Activated CD4-positive, alpha-beta T cell treated with anti-CD3 and anti-CD28 coated beads for 36 hours (primary cell): ENCODE measurements at regions of chr5 and their contacts with region 1.

Region 1: DNA sequence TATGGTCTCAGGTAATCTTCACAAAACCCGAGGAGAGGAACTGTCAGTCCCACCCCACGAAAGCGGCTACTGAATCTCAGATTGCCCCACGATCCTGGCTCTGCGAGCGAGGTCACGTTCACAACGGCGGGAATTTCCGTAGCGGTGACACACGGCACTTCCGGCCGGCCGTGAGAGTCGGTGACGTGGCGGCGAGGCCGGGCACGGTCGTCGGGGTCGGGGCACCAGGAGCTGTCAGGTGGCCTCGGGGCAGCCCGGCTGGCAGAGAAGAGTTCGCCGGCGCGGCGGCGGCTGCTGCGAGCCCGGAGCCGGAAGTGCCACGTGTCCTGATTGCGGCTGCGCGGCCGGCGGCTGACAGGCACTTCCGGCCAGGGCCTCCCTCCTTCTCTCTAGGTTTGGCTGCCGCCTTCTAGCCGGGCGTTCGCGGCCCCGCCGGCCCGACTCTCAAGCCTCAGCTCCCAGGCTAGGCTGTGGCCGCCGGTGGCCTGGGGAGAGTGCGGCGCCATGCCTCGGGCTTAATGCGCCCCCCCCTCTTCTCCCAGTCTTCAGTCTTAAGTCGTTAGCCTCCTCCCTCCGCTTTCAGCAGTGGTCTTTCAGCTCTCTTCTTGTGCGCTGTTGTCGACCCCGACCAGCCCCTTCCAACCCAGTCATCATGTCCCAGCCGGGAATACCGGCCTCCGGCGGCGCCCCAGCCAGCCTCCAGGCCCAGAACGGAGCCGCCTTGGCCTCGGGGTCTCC is at the start of gene SEC24A:
- DNase-seq: peak; percentile 96
- ATAC-seq: peak; percentile 88
- H3K4me3 Mint-ChIP-seq: peak within 1 kb of the TSS; percentile 87
- H3K27ac Mint-ChIP-seq: peak within 1 kb of the TSS; percentile 99
- H3K4me1 Mint-ChIP-seq: peaks cover 30% of the 10 kb centered on the region
- H3K27me3 Mint-ChIP-seq: no peaks in the 10 kb centered on the region
- total RNA-seq, gene SEC24A: 32.2 to 41.3 TPM

Region 2: DNA sequence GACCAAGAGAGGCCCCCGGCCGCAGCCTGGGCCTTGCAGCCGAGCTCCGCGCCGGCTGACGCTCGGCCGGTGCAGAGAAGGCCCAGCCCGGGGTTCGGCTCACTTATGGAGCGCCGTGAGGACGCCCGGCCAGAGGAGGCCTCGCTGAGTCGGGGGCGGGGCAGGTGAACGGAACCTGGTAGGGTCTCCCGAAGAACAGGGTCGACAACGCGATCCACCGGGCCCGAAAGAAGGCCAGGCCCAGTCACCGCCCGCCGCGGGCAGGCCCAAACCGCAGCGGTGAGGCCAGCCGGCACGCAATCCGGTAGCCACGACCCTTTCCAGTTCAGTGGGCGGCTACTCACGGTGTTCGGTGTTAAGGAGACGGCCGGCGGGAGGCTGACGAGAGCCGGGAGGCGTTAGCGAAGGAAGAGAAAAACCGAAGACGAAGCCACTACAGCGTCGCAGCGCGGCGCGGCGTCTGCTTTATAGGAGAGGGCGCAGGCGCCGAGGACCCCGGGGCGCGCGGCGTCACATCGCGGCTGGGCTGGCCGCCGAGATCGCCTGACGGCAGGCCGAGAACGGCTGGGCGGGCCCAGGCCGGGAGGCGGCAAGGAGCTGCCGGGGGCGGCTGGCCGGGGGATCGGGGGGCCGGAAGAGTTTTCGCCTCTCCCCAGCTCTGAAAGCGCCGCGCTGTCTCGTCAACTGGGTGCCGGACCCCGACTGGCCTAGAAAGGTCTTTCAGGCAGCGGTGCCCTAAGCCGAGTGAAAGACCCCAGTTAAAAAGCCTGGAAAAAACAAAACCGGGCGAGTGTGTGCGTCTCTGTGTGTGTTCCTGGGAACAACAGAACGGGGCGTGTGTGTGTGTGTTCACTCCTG is 471.9 kb before region 1 on chr5 and contains the start of gene SKP1:
- CTCF ChIA-PET with region 1: no interaction called
- POLR2A ChIA-PET with region 1: no interaction called
- intact Hi-C with region 1: loop called in 1 of 2 experiments (anchors 1 kb)
- DNase-seq: peak; percentile 91
- ATAC-seq: peak; percentile 85
- H3K4me3 Mint-ChIP-seq: peak within 1 kb of the TSS; percentile 98
- H3K27ac Mint-ChIP-seq: peak within 1 kb of the TSS; percentile 95
- H3K4me1 Mint-ChIP-seq: peaks cover 32% of the 10 kb centered on the region
- H3K27me3 Mint-ChIP-seq: no peaks in the 10 kb centered on the region
- total RNA-seq, gene SKP1: 218 to 265 TPM

Region 3: GRCh38 chr5:134603059-134603458 is 45.5 kb before region 1 on chr5:
- CTCF ChIA-PET with region 1: interaction called, 4 read pairs
- POLR2A ChIA-PET with region 1: interaction called, 4 read pairs
- intact Hi-C with region 1: loop called (anchors 1 kb)
- DNase-seq: no peak
- ATAC-seq: peak; percentile 91
- H3K4me3 Mint-ChIP-seq: peak overlapping the region; percentile 10
- H3K27ac Mint-ChIP-seq: peak overlapping the region; percentile 25
- H3K4me1 Mint-ChIP-seq: peaks cover 54% of the 10 kb centered on the region
- H3K27me3 Mint-ChIP-seq: no peaks in the 10 kb centered on the region

Region 4: DNA sequence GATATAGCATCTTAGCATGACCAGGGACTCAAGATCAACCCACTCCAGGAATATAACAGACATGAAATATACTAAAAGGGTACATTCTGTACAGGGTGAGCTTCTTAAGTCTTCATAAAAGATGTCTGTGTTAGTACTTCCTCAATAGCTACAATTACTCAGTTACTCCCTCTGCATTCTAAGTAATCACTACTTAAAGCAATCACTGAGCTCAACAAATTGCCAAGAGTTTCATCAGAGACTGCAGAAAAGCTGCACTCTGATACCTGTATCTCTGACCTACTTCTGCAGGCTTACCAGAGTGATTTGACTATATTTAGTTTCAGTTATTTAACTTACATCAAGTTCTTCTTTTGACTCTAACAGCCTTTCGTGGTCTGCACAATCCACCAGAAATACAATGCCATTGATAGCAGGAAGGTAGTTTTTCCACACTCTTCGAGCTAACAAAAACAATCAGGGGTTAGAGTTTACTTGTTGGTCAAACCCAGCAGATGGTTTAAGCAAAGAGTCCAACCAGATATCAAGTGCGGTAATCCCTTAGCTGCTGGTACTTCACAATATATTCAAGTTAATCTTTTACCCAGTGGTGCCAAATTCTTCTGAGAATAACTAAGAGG is 39.3 kb before region 1 on chr5:
- CTCF ChIA-PET with region 1: interaction called, 5 read pairs
- POLR2A ChIA-PET with region 1: interaction called, 4 read pairs
- intact Hi-C with region 1: loop called (anchors 1 kb)
- DNase-seq: peak; percentile 29
- ATAC-seq: peak; percentile 75
- H3K4me3 Mint-ChIP-seq: peak overlapping the region; percentile 13
- H3K27ac Mint-ChIP-seq: peak overlapping the region; percentile 94
- H3K4me1 Mint-ChIP-seq: peaks cover 42% of the 10 kb centered on the region
- H3K27me3 Mint-ChIP-seq: no peaks in the 10 kb centered on the region

Region 5: GRCh38 chr5:134637161-134637582 is 11.4 kb before region 1 on chr5:
- CTCF ChIA-PET with region 1: interaction called, 11 read pairs
- POLR2A ChIA-PET with region 1: interaction called, 4 read pairs
- intact Hi-C with region 1: loop called (anchors 1 kb)
- DNase-seq: no peak
- ATAC-seq: no peak
- H3K4me3 Mint-ChIP-seq: no peak overlapping the region
- H3K27ac Mint-ChIP-seq: no peak overlapping the region
- H3K4me1 Mint-ChIP-seq: peaks cover 6% of the 10 kb centered on the region
- H3K27me3 Mint-ChIP-seq: no peaks in the 10 kb centered on the region

Region 6: DNA sequence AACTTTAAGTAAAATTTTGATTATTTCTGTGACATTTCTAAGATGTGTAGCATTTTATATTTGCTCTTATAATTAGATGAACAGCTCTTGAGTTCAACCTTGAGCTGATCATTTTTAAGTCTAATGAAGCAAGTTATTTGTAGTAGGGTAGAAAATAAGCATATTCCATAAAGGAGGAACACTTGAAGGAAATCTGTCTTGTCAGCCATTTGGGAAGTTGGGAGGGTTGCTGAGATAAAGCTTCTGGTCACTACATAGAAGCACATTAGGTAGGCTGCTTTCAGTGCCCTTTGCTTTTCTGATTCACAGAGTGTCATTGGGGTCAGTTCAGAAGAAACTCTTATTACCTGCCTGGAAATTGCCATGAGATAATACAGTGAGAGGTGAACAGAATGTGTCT is 44.1 kb after region 1 on chr5:
- CTCF ChIA-PET with region 1: no interaction called
- POLR2A ChIA-PET with region 1: no interaction called
- intact Hi-C with region 1: no loop called
- DNase-seq: no peak
- ATAC-seq: no peak
- H3K4me3 Mint-ChIP-seq: no peak overlapping the region
- H3K27ac Mint-ChIP-seq: no peak overlapping the region
- H3K4me1 Mint-ChIP-seq: no peaks in the 10 kb centered on the region
- H3K27me3 Mint-ChIP-seq: no peaks in the 10 kb centered on the region

Region 7: DNA sequence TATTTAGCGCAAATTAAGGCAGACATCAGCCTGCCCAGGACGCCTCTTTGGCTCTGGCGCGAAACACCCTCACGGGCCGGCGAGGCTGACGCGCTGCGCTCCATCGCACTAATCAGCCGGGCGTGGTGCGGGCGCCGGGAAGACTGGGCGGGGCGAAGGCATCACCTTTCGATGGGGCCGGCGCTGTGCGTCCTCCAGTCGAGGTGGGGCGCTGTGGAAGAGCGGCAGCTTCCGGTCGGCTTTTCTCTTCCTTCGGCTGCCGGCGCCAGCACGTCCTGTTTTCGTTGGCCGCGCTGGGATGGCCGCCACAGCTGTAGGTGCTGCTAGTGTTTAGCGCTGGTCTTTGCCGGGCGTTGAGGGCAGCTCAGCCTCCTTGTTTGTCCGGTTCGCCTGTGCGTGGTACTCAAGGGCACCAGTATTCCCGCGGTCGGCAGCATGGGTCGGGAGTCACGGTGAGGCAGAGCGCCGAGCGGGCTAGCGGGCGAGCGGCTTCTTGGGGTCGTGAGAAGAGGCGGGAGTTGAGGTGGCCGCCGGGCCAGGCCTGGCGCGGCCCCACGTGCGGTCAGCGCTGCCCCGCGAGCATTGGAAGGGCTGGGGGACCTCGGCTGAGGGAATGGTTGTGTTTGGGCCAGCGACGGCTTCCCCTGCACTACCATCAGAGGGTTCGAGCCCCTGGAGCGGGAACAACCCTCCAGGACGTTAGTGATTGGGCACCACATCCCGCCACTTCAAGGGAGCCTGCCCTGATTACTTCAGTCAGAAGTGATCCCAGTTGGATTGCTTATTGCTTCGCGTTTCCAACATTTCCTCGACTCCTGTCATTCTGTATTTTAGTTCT is 110.1 kb after region 1 on chr5 and contains the start of gene DDX46:
- CTCF ChIA-PET with region 1: interaction called, 3 read pairs
- POLR2A ChIA-PET with region 1: no interaction called
- intact Hi-C with region 1: loop called (anchors 1 kb)
- DNase-seq: peak; percentile 98
- ATAC-seq: peak; percentile 99
- H3K4me3 Mint-ChIP-seq: peak within 1 kb of the TSS; percentile 94
- H3K27ac Mint-ChIP-seq: peak within 1 kb of the TSS; percentile 89
- H3K4me1 Mint-ChIP-seq: peaks cover 29% of the 10 kb centered on the region
- H3K27me3 Mint-ChIP-seq: no peaks in the 10 kb centered on the region
- total RNA-seq, gene DDX46: 63.5 to 86.7 TPM

Region 8: GRCh38 chr5:134873987-134874830 is 225.6 kb after region 1 on chr5 and contains the start of gene TXNDC15:
- CTCF ChIA-PET with region 1: no interaction called
- POLR2A ChIA-PET with region 1: no interaction called
- intact Hi-C with region 1: loop called in 1 of 2 experiments (anchors 1 kb)
- DNase-seq: peak; percentile 90
- ATAC-seq: peak; percentile 83
- H3K4me3 Mint-ChIP-seq: peak within 1 kb of the TSS; percentile 88
- H3K27ac Mint-ChIP-seq: peak within 1 kb of the TSS; percentile 97
- H3K4me1 Mint-ChIP-seq: peaks cover 37% of the 10 kb centered on the region
- H3K27me3 Mint-ChIP-seq: no peaks in the 10 kb centered on the region
- total RNA-seq, gene TXNDC15: 16.6 to 29.1 TPM